ENCODE measurements at regions of chr15 and their contacts with region 1.

Region 1: GRCh38 chr15:50765195-50765973 is at the start of gene SPPL2A:
- DNase-seq: peak; percentile 72 to 87
- H3K4me3 ChIP-seq: peak within 1 kb of the TSS; percentile 76 to 84
- H3K27ac ChIP-seq: peak within 1 kb of the TSS; percentile 90 to 96
- H3K4me1 ChIP-seq: peaks cover 0 to 47% (median 21%) of the 10 kb centered on the region in 4 donors
- H3K27me3 ChIP-seq: no peaks in the 10 kb centered on the region
- CTCF ChIP-seq: no peak

Region 2: GRCh38 chr15:50686468-50687301 is 78.7 kb before region 1 on chr15 and contains the start of gene TRPM7:
- intact Hi-C with region 1: loop called (anchors 5 kb)
- DNase-seq: peak; percentile 85 to 94
- H3K4me3 ChIP-seq: peak within 1 kb of the TSS; percentile 78 to 92
- H3K27ac ChIP-seq: peak within 1 kb of the TSS; percentile 88 to 91
- H3K4me1 ChIP-seq: peaks cover 0 to 33% (median 16%) of the 10 kb centered on the region in 4 donors
- H3K27me3 ChIP-seq: no peaks in the 10 kb centered on the region
- CTCF ChIP-seq: peak in 1 of 2 experiments; percentile 16

Region 3: GRCh38 chr15:50798684-50799083 is 33.3 kb after region 1 on chr15:
- intact Hi-C with region 1: no loop called
- DNase-seq: no peak
- H3K4me3 ChIP-seq: no peak overlapping the region
- H3K27ac ChIP-seq: no peak overlapping the region
- H3K4me1 ChIP-seq: no peaks in the 10 kb centered on the region
- H3K27me3 ChIP-seq: no peaks in the 10 kb centered on the region
- CTCF ChIP-seq: no peak

Region 4: GRCh38 chr15:50857763-50858162 is 92.4 kb after region 1 on chr15:
- intact Hi-C with region 1: no loop called
- DNase-seq: no peak
- H3K4me3 ChIP-seq: no peak overlapping the region
- H3K27ac ChIP-seq: no peak overlapping the region
- H3K4me1 ChIP-seq: peaks cover 0 to 9% (median 0%) of the 10 kb centered on the region in 4 donors
- H3K27me3 ChIP-seq: no peaks in the 10 kb centered on the region
- CTCF ChIP-seq: no peak

Region 5: GRCh38 chr15:50908210-50909009 is 143.0 kb after region 1 on chr15 and contains the start of gene AP4E1:
- intact Hi-C with region 1: loop called (anchors 5 kb)
- DNase-seq: peak; percentile 84 to 94
- H3K4me3 ChIP-seq: peak within 1 kb of the TSS; percentile 88 to 97
- H3K27ac ChIP-seq: peak within 1 kb of the TSS; percentile 90 to 92
- H3K4me1 ChIP-seq: peaks cover 0 to 34% (median 19%) of the 10 kb centered on the region in 4 donors
- H3K27me3 ChIP-seq: no peaks in the 10 kb centered on the region
- CTCF ChIP-seq: peak; percentile 97 to 98

Measured in tibial artery (tissue), 4 donors.